ENCODE measurements at regions of chr4 and their contacts with region 1.

Region 1: GRCh38 chr4:164012396-164013027 is 518.0 kb downstream of the TMA16 start:
- DNase-seq: peak; percentile 49
- ATAC-seq: peak; percentile 36
- H3K4me3 Mint-ChIP-seq: no peak overlapping the region
- H3K27ac Mint-ChIP-seq: no peak overlapping the region
- H3K4me1 Mint-ChIP-seq: peaks cover 20% of the 10 kb centered on the region
- H3K27me3 Mint-ChIP-seq: no peaks in the 10 kb centered on the region

Region 2: GRCh38 chr4:162874048-162874447 is 1138.5 kb before region 1 on chr4:
- CTCF ChIA-PET with region 1: no interaction called
- POLR2A ChIA-PET with region 1: no interaction called
- intact Hi-C with region 1: no loop called
- DNase-seq: no peak
- ATAC-seq: no peak
- H3K4me3 Mint-ChIP-seq: no peak overlapping the region
- H3K27ac Mint-ChIP-seq: no peak overlapping the region
- H3K4me1 Mint-ChIP-seq: no peaks in the 10 kb centered on the region
- H3K27me3 Mint-ChIP-seq: peaks cover 3% of the 10 kb centered on the region

Region 3: DNA sequence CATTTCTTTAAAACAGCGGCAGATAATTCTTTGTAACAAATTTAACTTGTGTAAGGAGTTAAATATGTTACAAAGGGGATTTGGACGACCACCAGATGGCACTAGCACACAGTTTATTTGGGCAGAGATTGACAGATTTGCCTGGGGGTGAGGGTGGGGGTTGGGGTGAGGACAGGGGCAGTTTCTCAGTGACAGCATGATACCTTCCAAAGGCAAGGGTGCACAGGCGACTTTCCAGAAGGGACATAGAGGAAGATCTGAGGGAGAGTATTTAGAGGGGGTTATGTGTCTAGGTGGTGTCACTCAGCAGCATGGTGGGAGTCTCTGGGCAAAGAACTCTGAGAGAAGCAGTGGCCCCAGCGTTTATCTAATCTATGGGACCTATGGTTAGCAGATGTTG is 527.6 kb before region 1 on chr4:
- CTCF ChIA-PET with region 1: no interaction called
- POLR2A ChIA-PET with region 1: no interaction called
- intact Hi-C with region 1: loop called in 1 of 2 experiments (anchors 10 kb)
- DNase-seq: peak; percentile 73
- ATAC-seq: peak; percentile 55
- H3K4me3 Mint-ChIP-seq: no peak overlapping the region
- H3K27ac Mint-ChIP-seq: no peak overlapping the region
- H3K4me1 Mint-ChIP-seq: no peaks in the 10 kb centered on the region
- H3K27me3 Mint-ChIP-seq: peaks cover 4% of the 10 kb centered on the region

Region 4: GRCh38 chr4:163554870-163555465 is 457.5 kb before region 1 on chr4:
- CTCF ChIA-PET with region 1: interaction called, 16 read pairs
- POLR2A ChIA-PET with region 1: no interaction called
- intact Hi-C with region 1: loop called (anchors 1 to 2 kb)
- DNase-seq: no peak
- ATAC-seq: no peak
- H3K4me3 Mint-ChIP-seq: no peak overlapping the region
- H3K27ac Mint-ChIP-seq: no peak overlapping the region
- H3K4me1 Mint-ChIP-seq: peaks cover 34% of the 10 kb centered on the region
- H3K27me3 Mint-ChIP-seq: no peaks in the 10 kb centered on the region

Region 5: DNA sequence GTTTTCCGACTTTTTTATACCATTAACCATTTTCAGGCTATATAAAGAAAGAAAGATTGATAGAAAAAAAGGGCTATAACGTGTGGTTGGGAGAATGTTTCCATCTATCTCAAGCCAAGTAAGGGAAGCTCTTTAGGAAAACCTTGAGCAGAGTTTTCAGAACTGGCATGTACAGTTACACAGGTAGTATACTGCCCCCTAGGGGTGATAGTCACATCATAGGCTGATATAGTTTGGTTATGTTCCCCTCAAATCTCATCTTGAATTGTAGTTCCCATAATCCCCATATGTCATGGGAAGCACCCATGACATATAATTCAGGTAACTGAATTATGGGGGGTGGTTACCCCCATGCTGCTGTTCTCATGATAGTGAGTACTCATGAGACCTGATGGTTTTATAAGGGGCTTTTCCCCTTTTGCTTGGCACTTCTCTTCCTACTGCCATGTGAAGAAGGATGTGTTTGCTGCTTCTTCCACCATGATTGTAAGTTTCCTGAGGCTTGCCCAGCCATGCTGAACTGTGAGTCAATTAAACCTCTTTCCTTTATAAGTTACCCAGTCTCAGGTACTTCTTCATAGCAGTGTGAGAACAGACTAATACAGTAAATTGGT is 331.2 kb before region 1 on chr4:
- CTCF ChIA-PET with region 1: no interaction called
- POLR2A ChIA-PET with region 1: no interaction called
- intact Hi-C with region 1: loop called in 1 of 2 experiments (anchors 2 kb)
- DNase-seq: peak; percentile 13
- ATAC-seq: peak; percentile 74
- H3K4me3 Mint-ChIP-seq: no peak overlapping the region
- H3K27ac Mint-ChIP-seq: no peak overlapping the region
- H3K4me1 Mint-ChIP-seq: no peaks in the 10 kb centered on the region
- H3K27me3 Mint-ChIP-seq: no peaks in the 10 kb centered on the region

Region 6: DNA sequence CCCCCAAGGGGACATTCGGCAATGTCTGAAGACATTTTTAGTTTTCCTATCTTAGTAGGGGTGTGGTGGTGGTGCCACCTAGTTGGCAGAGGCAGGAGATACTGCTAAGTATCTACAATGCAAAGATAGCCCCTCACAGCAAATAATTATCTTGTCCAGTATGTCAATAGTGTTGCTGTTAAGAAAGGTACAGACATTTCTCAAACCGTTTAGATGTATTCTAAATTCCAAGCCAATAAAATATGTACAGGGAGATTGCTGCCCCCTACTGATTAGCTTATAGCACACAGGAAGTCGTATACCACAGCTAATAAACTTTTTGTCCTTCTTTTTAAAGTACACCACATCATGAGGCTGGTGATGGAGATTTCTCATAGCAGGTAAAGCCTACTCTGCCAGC is 257.5 kb before region 1 on chr4:
- CTCF ChIA-PET with region 1: no interaction called
- POLR2A ChIA-PET with region 1: no interaction called
- intact Hi-C with region 1: loop called in 1 of 2 experiments (anchors 5 kb)
- DNase-seq: no peak
- ATAC-seq: peak; percentile 42
- H3K4me3 Mint-ChIP-seq: no peak overlapping the region
- H3K27ac Mint-ChIP-seq: no peak overlapping the region
- H3K4me1 Mint-ChIP-seq: peaks cover 2% of the 10 kb centered on the region
- H3K27me3 Mint-ChIP-seq: peaks cover under 1% of the 10 kb centered on the region

Region 7: DNA sequence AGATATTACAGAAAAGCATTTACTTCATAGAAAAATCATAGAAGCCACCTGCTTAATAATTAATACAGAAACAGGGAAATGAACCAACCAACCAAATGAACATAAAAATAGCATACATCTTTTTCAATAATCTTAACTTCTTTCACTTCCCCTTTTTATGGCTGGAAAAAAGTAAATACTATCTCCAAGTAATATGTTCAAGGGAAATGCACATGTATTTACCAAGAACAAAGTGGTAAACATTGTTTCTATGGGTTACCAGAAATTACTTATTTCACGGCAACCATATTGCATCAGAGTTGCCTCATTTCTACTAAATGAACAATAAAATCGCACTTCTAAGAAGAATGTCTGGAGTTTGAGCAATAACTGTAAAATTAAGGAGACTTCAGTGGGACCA is 196.7 kb before region 1 on chr4:
- CTCF ChIA-PET with region 1: no interaction called
- POLR2A ChIA-PET with region 1: no interaction called
- intact Hi-C with region 1: loop called in 1 of 2 experiments (anchors 5 kb)
- DNase-seq: no peak
- ATAC-seq: no peak
- H3K4me3 Mint-ChIP-seq: no peak overlapping the region
- H3K27ac Mint-ChIP-seq: no peak overlapping the region
- H3K4me1 Mint-ChIP-seq: no peaks in the 10 kb centered on the region
- H3K27me3 Mint-ChIP-seq: no peaks in the 10 kb centered on the region

Region 8: DNA sequence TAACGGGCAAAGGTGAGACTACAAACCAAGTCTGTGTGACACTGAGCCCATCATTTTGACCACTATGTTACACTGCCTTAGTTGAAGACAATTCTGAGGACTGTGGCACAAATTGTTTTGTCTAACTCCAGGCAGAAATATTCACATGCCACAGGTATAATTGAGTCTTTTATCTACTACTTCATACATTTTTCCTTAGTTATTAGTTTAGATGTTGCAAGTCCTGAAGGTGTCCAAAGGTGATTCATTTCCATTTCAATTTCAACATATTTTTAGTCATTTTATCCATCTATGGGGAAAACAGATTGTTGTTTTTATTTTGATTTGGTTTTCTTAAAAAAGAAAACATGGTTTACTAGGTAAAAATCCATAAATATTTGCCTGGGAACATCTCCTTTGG is 399.7 kb after region 1 on chr4:
- CTCF ChIA-PET with region 1: no interaction called
- POLR2A ChIA-PET with region 1: no interaction called
- intact Hi-C with region 1: no loop called
- DNase-seq: no peak
- ATAC-seq: no peak
- H3K4me3 Mint-ChIP-seq: no peak overlapping the region
- H3K27ac Mint-ChIP-seq: no peak overlapping the region
- H3K4me1 Mint-ChIP-seq: no peaks in the 10 kb centered on the region
- H3K27me3 Mint-ChIP-seq: peaks cover 2% of the 10 kb centered on the region